ENCODE measurements at regions of chr16 and their contacts with region 1.

Region 1: DNA sequence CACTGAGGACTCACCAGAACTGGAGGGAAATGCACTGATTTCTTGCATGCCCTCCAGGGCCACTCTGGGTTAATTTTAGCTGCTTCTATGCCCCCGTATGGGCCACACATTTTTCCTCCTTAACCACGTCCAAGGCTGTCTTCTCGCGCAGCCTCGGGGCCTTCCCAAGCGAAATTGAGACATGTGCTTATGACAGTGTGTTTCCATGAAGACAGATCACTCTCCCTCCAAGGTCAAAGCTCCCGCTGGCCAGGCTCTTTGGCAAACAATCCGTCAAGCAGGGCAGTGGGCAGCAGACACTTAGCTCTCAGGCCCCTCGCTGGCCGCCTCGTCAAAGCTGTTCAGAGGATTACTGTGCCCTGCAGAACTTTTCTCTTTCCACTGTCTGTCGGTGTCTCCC is 243.0 kb upstream of the N4BP1 start:
- DNase-seq: no peak
- H3K4me3 ChIP-seq: no peak overlapping the region
- H3K4me3 Mint-ChIP-seq: no peak overlapping the region
- H3K27ac Mint-ChIP-seq: no peak overlapping the region
- H3K4me1 ChIP-seq: no peaks in the 10 kb centered on the region
- H3K4me1 Mint-ChIP-seq: no peaks in the 10 kb centered on the region
- H3K27me3 ChIP-seq: no peaks in the 10 kb centered on the region; the same call in 1 of the 2 replicates
- H3K27me3 Mint-ChIP-seq: peaks cover 10% of the 10 kb centered on the region
- CTCF ChIP-seq: no peak

Region 2: GRCh38 chr16:48879223-48880122 is 26.5 kb after region 1 on chr16:
- CTCF ChIA-PET with region 1: no interaction called
- POLR2A ChIA-PET with region 1: no interaction called
- intact Hi-C with region 1: loop called (anchors 1 kb)
- DNase-seq: no peak
- H3K4me3 ChIP-seq: no peak overlapping the region
- H3K4me3 Mint-ChIP-seq: no peak overlapping the region
- H3K27ac Mint-ChIP-seq: no peak overlapping the region
- H3K4me1 ChIP-seq: no peaks in the 10 kb centered on the region
- H3K4me1 Mint-ChIP-seq: no peaks in the 10 kb centered on the region
- H3K27me3 ChIP-seq: no peaks in the 10 kb centered on the region; the same call in 1 of the 2 replicates
- H3K27me3 Mint-ChIP-seq: peaks cover 14% of the 10 kb centered on the region
- CTCF ChIP-seq: no peak